ENCODE measurements at regions of chr2 and their contacts with region 1.

Region 1: GRCh38 chr2:56040189-56040588 is 116.6 kb upstream of the EFEMP1 start:
- DNase-seq: no peak
- H3K4me3 ChIP-seq: no peak overlapping the region
- H3K27ac ChIP-seq: no peak overlapping the region
- H3K4me1 ChIP-seq: no peaks in the 10 kb centered on the region
- H3K27me3 ChIP-seq: no peaks in the 10 kb centered on the region
- CTCF ChIP-seq: no peak
- EP300 ChIP-seq: no peak
- POLR2A ChIP-seq: no peak

Region 2: DNA sequence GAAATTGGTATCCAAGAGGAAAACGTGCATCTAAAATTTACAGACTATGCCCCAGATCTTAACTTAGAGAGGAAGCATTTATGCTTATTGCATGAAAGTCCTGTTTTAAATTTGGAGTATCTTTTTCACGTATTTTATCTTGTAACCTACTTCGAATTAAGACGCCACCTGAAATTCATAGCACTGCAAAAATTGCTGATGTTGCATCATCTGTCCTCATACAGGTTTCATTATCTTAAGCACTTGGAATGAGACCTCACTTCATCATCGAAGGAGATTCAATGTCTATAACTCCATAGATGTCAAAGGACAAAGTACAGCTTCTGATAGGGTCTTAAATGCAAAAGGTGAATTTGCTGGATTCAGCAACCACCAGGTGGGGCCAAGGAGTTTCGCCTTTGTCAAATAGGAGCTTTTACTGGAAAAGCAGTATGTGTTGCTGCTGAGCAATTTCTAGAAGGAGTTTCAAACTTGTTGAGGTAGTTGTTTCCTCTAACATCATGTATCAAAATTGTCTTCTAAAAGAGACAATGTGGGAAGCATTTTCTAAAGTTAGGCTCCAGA is 37.2 kb after region 1 on chr2:
- in situ Hi-C with region 1: no loop called
- intact Hi-C with region 1: loop called (anchors 1 kb)
- DNase-seq: no peak
- H3K4me3 ChIP-seq: no peak overlapping the region
- H3K27ac ChIP-seq: no peak overlapping the region
- H3K4me1 ChIP-seq: no peaks in the 10 kb centered on the region
- H3K27me3 ChIP-seq: no peaks in the 10 kb centered on the region
- CTCF ChIP-seq: no peak
- EP300 ChIP-seq: no peak
- POLR2A ChIP-seq: no peak

Region 3: DNA sequence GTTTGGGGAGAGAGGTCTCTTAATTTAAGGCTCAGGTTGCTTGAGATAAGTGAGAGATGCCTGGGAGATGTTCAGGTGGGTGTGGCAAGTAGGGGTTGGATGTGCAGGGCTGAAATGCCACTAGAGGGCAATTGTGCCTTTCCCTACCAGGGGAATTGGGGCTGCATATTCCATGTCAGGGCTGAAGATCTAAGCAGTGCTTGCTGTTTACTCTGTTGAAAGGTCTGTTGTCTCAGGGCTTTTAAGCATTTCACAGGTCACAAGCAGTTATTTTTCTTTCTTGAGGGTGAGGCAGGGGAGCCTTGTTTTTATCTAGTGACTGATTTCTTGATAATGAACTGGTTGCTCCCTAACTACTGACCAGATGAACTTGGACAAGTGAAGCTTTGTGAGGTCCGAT is 151.5 kb after region 1 on chr2:
- in situ Hi-C with region 1: no loop called
- intact Hi-C with region 1: no loop called
- DNase-seq: no peak
- H3K4me3 ChIP-seq: no peak overlapping the region
- H3K27ac ChIP-seq: no peak overlapping the region
- H3K4me1 ChIP-seq: no peaks in the 10 kb centered on the region
- H3K27me3 ChIP-seq: peaks cover 21% of the 10 kb centered on the region
- CTCF ChIP-seq: peak in 4 of 5 experiments; percentile 19 to 32 (median 28)
- EP300 ChIP-seq: no peak
- POLR2A ChIP-seq: no peak

Measured in transverse colon (tissue), 4 donors.